Activated CD4-positive, alpha-beta T cell treated with anti-CD3 and anti-CD28 coated beads for 36 hours (primary cell): ENCODE measurements at regions of chr21 and their contacts with region 1.

Region 1: DNA sequence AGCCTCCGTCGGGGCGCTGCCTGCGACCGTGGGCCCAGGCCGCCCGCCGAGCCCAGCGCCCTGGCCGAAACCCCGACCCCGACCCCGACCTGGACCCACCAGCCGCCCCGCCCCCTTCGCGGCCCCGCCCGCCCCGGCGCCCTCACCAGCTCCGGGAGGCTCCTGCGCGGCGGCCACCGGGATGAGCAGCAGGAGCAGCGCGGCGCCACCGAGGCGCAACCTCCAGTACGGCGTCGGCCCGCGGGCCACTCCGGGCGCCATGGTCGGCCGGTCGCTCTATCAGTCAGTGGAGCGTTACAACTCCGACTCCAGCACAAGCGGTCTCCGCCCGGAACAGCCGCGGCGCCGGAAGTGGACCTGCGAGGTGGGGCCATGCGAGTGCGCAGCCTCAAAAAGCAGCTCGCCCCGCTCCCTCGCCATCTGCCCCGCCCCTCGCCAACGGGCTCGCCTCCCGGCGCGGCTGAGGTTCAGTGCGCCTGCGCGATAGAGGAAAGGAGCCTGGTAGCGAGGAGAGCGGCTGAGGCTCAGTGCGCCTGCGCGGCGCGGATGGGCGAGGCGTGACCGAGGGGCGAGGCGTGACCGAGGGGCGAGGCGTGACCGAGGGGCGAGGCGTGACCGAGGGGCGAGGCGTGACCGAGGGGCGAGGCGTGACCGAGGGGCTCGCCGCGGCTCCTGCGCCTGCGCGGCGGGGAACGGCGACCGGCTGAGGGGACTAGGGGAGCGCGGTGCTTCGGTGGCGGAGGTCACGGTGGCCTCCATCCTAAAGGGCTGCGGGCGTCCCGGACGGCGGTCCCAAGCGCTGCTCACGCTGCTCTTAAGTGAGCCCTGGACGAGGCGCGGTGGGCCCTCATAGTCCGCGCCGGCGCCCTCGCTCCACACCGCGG is at the start of gene PTTG1IP:
- DNase-seq: peak; percentile 100
- ATAC-seq: peak; percentile 82
- H3K4me3 Mint-ChIP-seq: peak within 1 kb of the TSS; percentile 92
- H3K27ac Mint-ChIP-seq: peak within 1 kb of the TSS; percentile 85
- H3K4me1 Mint-ChIP-seq: peaks cover 51% of the 10 kb centered on the region
- H3K27me3 Mint-ChIP-seq: no peaks in the 10 kb centered on the region
- total RNA-seq, gene PTTG1IP: 34.8 to 44.3 TPM

Region 2: GRCh38 chr21:42973991-42974831 is 1899.4 kb before region 1 on chr21 and contains the start of gene PKNOX1:
- CTCF ChIA-PET with region 1: no interaction called
- POLR2A ChIA-PET with region 1: no interaction called
- intact Hi-C with region 1: loop called in 1 of 2 experiments (anchors 5 kb)
- DNase-seq: peak; percentile 100
- ATAC-seq: peak; percentile 89
- H3K4me3 Mint-ChIP-seq: peak within 1 kb of the TSS; percentile 85
- H3K27ac Mint-ChIP-seq: peak within 1 kb of the TSS; percentile 94
- H3K4me1 Mint-ChIP-seq: peaks cover 30% of the 10 kb centered on the region
- H3K27me3 Mint-ChIP-seq: no peaks in the 10 kb centered on the region
- total RNA-seq, gene PKNOX1: 13.4 to 14.8 TPM

Region 3: DNA sequence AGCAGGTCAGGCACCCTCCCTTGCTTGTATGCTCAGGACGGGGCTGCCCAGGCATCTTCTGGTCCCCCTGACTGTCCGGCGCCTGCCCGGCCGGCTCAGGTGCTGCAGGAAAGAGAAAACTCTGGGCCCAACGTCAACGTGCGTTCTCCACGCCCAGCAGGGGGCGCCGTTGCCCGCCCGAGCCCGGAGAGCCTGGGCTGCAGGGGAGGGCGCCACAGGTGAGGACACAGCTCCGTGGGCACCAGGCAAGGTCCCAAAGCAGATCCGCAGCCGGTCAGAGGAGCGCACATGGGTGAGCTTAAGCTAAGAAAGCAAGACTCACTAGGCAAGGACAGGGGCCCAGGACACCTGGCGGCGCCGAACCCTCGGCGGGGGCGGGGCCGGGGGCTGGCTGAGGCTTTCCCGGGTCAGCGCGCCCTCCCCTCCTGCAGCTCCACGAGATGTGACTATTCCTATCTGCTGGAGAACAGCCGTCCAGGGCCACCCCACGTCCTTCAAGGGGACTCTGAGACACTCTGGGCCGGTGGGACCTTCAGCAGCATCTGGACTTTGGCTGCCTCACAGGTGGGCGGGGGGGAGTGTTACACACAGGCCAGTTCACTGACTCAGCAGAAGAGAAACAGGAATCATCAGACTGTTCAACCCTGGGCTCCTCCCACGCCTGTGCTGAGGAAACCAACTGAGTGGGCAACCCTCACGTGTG is 362.9 kb before region 1 on chr21:
- CTCF ChIA-PET with region 1: no interaction called
- POLR2A ChIA-PET with region 1: no interaction called
- intact Hi-C with region 1: loop called (anchors 1 to 10 kb)
- DNase-seq: peak; percentile 89
- ATAC-seq: peak; percentile 94
- H3K4me3 Mint-ChIP-seq: no peak overlapping the region
- H3K27ac Mint-ChIP-seq: no peak overlapping the region
- H3K4me1 Mint-ChIP-seq: no peaks in the 10 kb centered on the region
- H3K27me3 Mint-ChIP-seq: no peaks in the 10 kb centered on the region

Region 4: GRCh38 chr21:44785620-44786335 is 87.8 kb before region 1 on chr21:
- CTCF ChIA-PET with region 1: no interaction called
- POLR2A ChIA-PET with region 1: no interaction called
- intact Hi-C with region 1: no loop called
- DNase-seq: no peak
- ATAC-seq: no peak
- H3K4me3 Mint-ChIP-seq: no peak overlapping the region
- H3K27ac Mint-ChIP-seq: no peak overlapping the region
- H3K4me1 Mint-ChIP-seq: peaks cover 27% of the 10 kb centered on the region
- H3K27me3 Mint-ChIP-seq: no peaks in the 10 kb centered on the region

Region 5: DNA sequence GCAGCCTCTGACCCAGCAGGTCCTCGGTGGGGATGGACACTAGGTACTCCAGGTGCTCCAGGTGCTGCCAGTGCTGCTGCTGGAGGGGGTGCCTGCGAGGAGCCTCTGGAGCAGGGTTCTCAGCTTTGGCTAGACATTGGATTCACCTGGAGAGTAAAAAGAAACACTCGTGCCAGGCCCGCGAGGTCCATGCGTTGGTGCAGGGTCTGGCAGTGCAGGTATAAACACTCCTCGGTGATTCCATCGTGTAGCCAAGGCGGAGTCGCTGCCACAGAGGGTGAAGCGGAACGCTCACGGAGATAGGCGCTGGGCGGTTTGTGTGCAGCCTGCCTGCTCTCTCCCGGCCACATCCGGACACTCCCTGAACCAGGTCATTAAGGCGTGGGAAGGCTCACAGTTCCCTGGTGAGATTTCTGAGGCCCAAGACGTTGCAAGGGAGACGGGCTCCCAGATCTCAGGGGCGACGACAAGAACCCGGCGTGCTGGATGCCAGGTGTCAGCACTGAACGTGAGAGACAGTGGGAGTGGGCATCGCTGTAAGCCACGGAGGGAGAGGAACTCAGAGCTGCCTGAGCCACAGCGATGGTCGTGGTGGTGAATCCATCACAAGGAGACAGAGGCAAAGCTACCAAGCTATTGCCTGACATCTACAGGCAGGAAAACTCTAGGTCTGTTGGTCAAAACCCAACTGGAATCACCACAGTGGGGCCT is 38.5 kb before region 1 on chr21:
- CTCF ChIA-PET with region 1: no interaction called
- POLR2A ChIA-PET with region 1: no interaction called
- intact Hi-C with region 1: loop called in 1 of 2 experiments (anchors 5 kb)
- DNase-seq: no peak
- ATAC-seq: no peak
- H3K4me3 Mint-ChIP-seq: no peak overlapping the region
- H3K27ac Mint-ChIP-seq: no peak overlapping the region
- H3K4me1 Mint-ChIP-seq: peaks cover 10% of the 10 kb centered on the region
- H3K27me3 Mint-ChIP-seq: no peaks in the 10 kb centered on the region

Region 6: GRCh38 chr21:44920694-44921604 is 47.4 kb after region 1 on chr21 and contains the start of gene ITGB2:
- CTCF ChIA-PET with region 1: interaction called, 4 read pairs
- POLR2A ChIA-PET with region 1: no interaction called
- intact Hi-C with region 1: loop called (anchors 2 to 5 kb)
- DNase-seq: peak; percentile 85
- ATAC-seq: peak; percentile 73
- H3K4me3 Mint-ChIP-seq: peak within 1 kb of the TSS; percentile 90
- H3K27ac Mint-ChIP-seq: peak within 1 kb of the TSS; percentile 96
- H3K4me1 Mint-ChIP-seq: peaks cover 72% of the 10 kb centered on the region
- H3K27me3 Mint-ChIP-seq: no peaks in the 10 kb centered on the region
- total RNA-seq, gene ITGB2: 217 to 250 TPM

Region 7: GRCh38 chr21:45019076-45019956 is 145.7 kb after region 1 on chr21:
- CTCF ChIA-PET with region 1: no interaction called
- POLR2A ChIA-PET with region 1: no interaction called
- intact Hi-C with region 1: no loop called
- DNase-seq: peak; percentile 8
- ATAC-seq: no peak
- H3K4me3 Mint-ChIP-seq: no peak overlapping the region
- H3K27ac Mint-ChIP-seq: no peak overlapping the region
- H3K4me1 Mint-ChIP-seq: peaks cover 6% of the 10 kb centered on the region
- H3K27me3 Mint-ChIP-seq: peaks cover 25% of the 10 kb centered on the region

Region 8: GRCh38 chr21:45074048-45074817 is 200.6 kb after region 1 on chr21 and contains the start of gene ADARB1:
- CTCF ChIA-PET with region 1: interaction called, 3 read pairs
- POLR2A ChIA-PET with region 1: no interaction called
- intact Hi-C with region 1: loop called in 1 of 2 experiments (anchors 2 kb)
- DNase-seq: peak; percentile 75
- ATAC-seq: peak; percentile 13
- H3K4me3 Mint-ChIP-seq: peak within 1 kb of the TSS; percentile 88
- H3K27ac Mint-ChIP-seq: peak within 1 kb of the TSS; percentile 91
- H3K4me1 Mint-ChIP-seq: peaks cover 42% of the 10 kb centered on the region
- H3K27me3 Mint-ChIP-seq: no peaks in the 10 kb centered on the region
- total RNA-seq, gene ADARB1: 32.8 to 37.7 TPM

Region 9: DNA sequence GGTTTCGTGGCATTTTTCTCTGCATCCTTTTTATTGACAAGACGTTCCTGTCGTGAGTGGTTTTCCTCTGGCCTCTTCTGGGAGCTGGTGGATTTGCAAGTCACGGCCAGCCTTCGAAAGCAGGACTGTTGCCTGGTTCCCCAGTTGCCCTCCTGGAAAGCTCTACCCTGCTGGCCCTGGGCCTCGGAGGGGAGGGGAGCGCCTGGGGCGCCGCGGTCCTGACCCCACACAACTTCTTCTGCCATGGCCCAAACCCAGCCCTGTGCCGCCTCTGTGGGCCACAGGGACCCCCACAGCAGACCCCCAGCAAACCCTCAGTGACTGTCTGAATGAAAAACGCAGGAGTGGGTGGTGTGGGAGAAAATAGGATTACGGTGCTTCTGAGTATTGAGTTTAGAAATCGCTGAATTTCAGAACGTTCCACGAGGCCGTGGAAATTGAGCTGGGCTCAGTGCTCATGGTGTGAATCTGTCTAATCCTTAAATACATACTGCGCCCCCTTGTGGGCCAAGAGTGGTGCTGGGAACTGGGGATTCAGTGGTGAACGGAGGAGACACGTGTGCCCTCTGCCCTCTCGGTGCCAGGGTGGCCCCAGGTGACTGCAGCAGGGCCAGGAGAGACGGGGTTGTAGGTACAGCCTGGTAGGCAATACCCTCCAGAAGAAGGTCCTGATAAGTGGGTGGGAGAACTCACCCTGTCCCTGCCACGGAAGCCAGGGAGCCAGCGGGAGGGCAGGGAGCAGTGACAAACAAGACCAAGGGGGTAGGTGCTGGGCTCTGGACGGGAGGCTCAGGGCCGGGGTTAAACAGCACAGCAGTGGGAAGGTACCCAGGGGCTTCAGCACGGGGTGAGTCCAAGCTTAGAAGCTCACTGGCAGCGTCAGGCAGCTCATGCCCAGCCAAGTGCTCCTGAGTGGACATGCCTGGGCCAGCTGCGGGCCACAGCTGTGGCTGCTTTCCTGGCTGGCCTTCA is 1006.8 kb after region 1 on chr21:
- CTCF ChIA-PET with region 1: no interaction called
- POLR2A ChIA-PET with region 1: no interaction called
- intact Hi-C with region 1: no loop called
- DNase-seq: peak; percentile 90
- ATAC-seq: peak; percentile 96
- H3K4me3 Mint-ChIP-seq: no peak overlapping the region
- H3K27ac Mint-ChIP-seq: peak overlapping the region; percentile 73
- H3K4me1 Mint-ChIP-seq: peaks cover 55% of the 10 kb centered on the region
- H3K27me3 Mint-ChIP-seq: no peaks in the 10 kb centered on the region